Activated CD8-positive, alpha-beta T cell treated with anti-CD3 and anti-CD28 coated beads, Interleukin-2, amount 10 ng/mL, durations not matched to agents 7 days and 5 days (primary cell): ENCODE measurements at regions of chr4 and their contacts with region 1.

Region 1: GRCh38 chr4:22607382-22607781 is 85.4 kb upstream of the GBA3 start:
- DNase-seq: peak; percentile 71
- ATAC-seq: peak; percentile 98
- H3K4me3 Mint-ChIP-seq: no peak overlapping the region
- H3K27ac Mint-ChIP-seq: peak overlapping the region; percentile 62
- H3K4me1 Mint-ChIP-seq: peaks cover 34% of the 10 kb centered on the region
- H3K27me3 Mint-ChIP-seq: no peaks in the 10 kb centered on the region

Region 2: GRCh38 chr4:22410645-22411247 is 196.6 kb before region 1 on chr4:
- CTCF ChIA-PET with region 1: interaction called, 22 read pairs
- POLR2A ChIA-PET with region 1: no interaction called
- DNase-seq: no peak
- ATAC-seq: no peak
- H3K4me3 Mint-ChIP-seq: no peak overlapping the region
- H3K27ac Mint-ChIP-seq: no peak overlapping the region
- H3K4me1 Mint-ChIP-seq: no peaks in the 10 kb centered on the region
- H3K27me3 Mint-ChIP-seq: no peaks in the 10 kb centered on the region

Region 3: DNA sequence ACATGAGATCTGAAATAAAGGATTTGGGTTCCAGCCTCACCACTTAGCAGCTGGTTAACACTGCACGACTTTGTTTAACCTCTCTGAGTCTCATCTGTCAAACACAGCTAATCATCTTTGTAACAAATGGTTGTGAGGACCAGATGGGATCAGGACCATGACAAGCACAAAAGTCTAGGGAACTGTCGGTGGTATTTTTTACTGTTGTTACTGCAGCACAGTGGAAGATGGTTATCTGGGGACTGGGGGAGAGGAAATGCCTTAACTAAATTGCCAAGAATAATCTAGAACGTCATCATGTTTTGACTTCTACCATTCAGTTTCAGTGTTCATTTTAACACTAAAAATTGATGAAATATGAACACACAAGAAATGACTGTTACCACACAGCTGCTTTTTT is 191.0 kb before region 1 on chr4:
- CTCF ChIA-PET with region 1: interaction called, 22 read pairs
- POLR2A ChIA-PET with region 1: no interaction called
- DNase-seq: no peak
- ATAC-seq: no peak
- H3K4me3 Mint-ChIP-seq: no peak overlapping the region
- H3K27ac Mint-ChIP-seq: no peak overlapping the region
- H3K4me1 Mint-ChIP-seq: peaks cover 1% of the 10 kb centered on the region
- H3K27me3 Mint-ChIP-seq: no peaks in the 10 kb centered on the region

Region 4: GRCh38 chr4:22625311-22625710 is 17.9 kb after region 1 on chr4:
- CTCF ChIA-PET with region 1: no interaction called
- POLR2A ChIA-PET with region 1: no interaction called
- DNase-seq: no peak
- ATAC-seq: no peak
- H3K4me3 Mint-ChIP-seq: no peak overlapping the region
- H3K27ac Mint-ChIP-seq: no peak overlapping the region
- H3K4me1 Mint-ChIP-seq: no peaks in the 10 kb centered on the region
- H3K27me3 Mint-ChIP-seq: no peaks in the 10 kb centered on the region